ENCODE measurements at regions of chr10 and their contacts with region 1.

Region 1: GRCh38 chr10:124632064-124632531 is 112.1 kb downstream of the FAM53B start:
- DNase-seq: no peak
- ATAC-seq: peak; percentile 36; the same call in 1 of the 2 replicates
- H3K4me3 ChIP-seq: no peak overlapping the region
- H3K27ac ChIP-seq: no peak overlapping the region
- H3K4me1 ChIP-seq: peaks cover 10 to 12% of the 10 kb centered on the region in 2 experiments
- H3K27me3 ChIP-seq: no peaks in the 10 kb centered on the region
- CTCF ChIP-seq: peak in 2 of 3 experiments; percentile 35 to 50; a peak in 4 of 6 replicates
- POLR2A ChIP-seq: no peak
- RAD21 ChIP-seq: peak; percentile 66

Region 2: DNA sequence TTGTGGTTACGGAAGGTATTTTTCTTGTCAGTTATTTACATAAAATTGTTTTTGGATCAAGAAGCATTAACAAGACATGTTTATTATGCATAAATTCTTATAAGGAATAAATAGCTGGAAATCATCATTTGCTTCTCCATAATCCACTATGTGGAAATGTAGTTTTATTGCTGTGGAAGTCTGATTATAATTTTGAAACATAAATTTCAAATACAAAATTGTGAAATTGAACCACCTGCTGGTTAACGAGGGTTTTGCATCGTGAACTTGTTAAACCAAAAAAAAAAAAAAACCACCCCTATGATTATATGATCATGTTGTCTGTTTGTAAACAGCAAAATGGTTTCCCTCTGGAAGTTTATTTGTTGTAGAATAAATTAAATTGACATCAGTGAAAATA is 195.4 kb after region 1 on chr10:
- CTCF ChIA-PET with region 1: no interaction called
- POLR2A ChIA-PET with region 1: no interaction called
- RAD21 ChIA-PET with region 1: no interaction called
- intact Hi-C with region 1: loop called (anchors 5 kb)
- DNase-seq: no peak
- ATAC-seq: no peak
- H3K4me3 ChIP-seq: no peak overlapping the region
- H3K27ac ChIP-seq: no peak overlapping the region
- H3K4me1 ChIP-seq: no peaks in the 10 kb centered on the region
- H3K27me3 ChIP-seq: no peaks in the 10 kb centered on the region
- CTCF ChIP-seq: peak; percentile 51 to 72 (median 60); a peak in 5 of 6 replicates
- POLR2A ChIP-seq: no peak
- RAD21 ChIP-seq: peak; percentile 58

Measured in HCT116 (cell line).